Gastrocnemius medialis (tissue), 4 donors: ENCODE measurements at regions of chr15 and their contacts with region 1.

Region 1: DNA sequence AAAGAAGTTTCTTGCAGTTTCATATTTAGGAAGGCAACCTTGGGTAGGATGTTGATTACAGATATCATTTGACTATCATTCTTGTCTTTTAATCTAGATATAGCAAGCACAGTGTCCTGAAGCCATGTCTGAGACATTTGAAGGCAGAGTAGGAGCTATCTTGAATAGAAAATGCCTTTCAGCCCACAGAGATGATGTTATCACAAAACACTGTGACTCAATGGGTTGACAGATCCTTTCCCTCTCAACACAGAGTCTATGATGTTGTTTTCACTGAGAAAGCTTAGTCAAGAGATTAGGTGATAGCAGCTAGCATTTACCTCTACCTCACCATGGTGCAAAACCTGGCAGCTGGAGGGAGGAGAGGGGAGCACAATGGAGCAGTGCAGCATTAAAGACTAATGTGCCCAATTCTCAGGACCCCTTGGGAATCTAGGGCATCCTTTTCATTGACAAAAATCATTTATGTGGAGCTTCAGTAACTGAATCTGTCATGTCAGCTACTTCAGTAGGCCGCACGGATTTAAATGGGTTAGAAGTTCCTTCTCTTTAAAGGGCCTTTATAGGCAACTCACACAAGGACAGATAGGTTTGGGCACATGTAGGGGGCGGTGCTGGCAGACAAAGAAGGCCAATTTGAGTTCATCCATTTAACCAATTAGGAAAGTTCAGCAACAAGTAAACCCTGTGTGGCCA is 121.8 kb downstream of the AGBL1 start:
- DNase-seq: no peak
- ATAC-seq: no peak
- H3K4me3 ChIP-seq: no peak overlapping the region
- H3K27ac ChIP-seq: no peak overlapping the region
- H3K4me1 ChIP-seq: peaks cover 4 to 9% of the 10 kb centered on the region in 2 donors
- H3K27me3 ChIP-seq: no peaks in the 10 kb centered on the region
- CTCF ChIP-seq: no peak
- POLR2A ChIP-seq: no peak

Region 2: GRCh38 chr15:86106306-86106705 is 95.2 kb before region 1 on chr15:
- in situ Hi-C with region 1: no loop called
- intact Hi-C with region 1: no loop called
- DNase-seq: no peak
- ATAC-seq: no peak
- H3K4me3 ChIP-seq: no peak overlapping the region
- H3K27ac ChIP-seq: no peak overlapping the region
- H3K4me1 ChIP-seq: peaks cover 6 to 23% of the 10 kb centered on the region in 2 donors
- H3K27me3 ChIP-seq: no peaks in the 10 kb centered on the region
- CTCF ChIP-seq: no peak
- POLR2A ChIP-seq: no peak

Region 3: DNA sequence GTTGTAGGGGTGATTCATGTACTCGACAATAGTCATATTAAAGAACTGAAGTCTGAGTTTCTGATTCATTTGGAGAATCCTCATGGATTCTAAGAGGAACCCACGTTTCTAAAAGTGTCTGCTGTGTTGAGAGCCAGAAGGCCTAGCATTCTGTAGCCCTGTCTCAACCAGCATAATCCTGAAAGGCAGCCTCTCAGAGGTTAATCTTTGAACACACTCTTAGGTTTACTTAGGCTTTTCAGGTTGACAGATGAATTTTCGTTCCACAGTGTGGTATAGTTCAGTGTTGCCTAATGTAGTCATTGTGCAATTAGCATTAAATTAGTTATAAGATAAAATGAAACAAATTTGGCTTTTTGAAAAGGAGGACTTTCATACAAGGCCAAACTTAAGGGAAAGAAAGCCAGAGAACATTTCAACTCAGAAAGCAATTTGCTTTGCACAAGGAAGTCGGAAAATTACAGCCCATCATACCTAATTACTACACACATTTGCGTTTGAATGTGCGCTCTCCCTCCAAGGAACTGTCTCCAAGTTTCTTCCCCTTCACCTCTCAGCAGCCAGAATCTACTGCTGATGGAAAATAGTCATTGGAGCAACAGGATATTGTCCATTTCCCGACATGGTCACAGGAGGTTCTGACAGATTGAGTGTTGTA is 79.8 kb before region 1 on chr15:
- in situ Hi-C with region 1: loop called in 1 of 4 experiments (anchors 10 kb)
- intact Hi-C with region 1: no loop called
- DNase-seq: no peak
- ATAC-seq: no peak
- H3K4me3 ChIP-seq: no peak overlapping the region
- H3K27ac ChIP-seq: no peak overlapping the region
- H3K4me1 ChIP-seq: peaks cover 0 to 26% of the 10 kb centered on the region in 2 donors
- H3K27me3 ChIP-seq: no peaks in the 10 kb centered on the region
- CTCF ChIP-seq: no peak
- POLR2A ChIP-seq: no peak